Gastrocnemius medialis (tissue), 4 donors: ENCODE measurements at regions of chr3 and their contacts with region 1.

Region 1: DNA sequence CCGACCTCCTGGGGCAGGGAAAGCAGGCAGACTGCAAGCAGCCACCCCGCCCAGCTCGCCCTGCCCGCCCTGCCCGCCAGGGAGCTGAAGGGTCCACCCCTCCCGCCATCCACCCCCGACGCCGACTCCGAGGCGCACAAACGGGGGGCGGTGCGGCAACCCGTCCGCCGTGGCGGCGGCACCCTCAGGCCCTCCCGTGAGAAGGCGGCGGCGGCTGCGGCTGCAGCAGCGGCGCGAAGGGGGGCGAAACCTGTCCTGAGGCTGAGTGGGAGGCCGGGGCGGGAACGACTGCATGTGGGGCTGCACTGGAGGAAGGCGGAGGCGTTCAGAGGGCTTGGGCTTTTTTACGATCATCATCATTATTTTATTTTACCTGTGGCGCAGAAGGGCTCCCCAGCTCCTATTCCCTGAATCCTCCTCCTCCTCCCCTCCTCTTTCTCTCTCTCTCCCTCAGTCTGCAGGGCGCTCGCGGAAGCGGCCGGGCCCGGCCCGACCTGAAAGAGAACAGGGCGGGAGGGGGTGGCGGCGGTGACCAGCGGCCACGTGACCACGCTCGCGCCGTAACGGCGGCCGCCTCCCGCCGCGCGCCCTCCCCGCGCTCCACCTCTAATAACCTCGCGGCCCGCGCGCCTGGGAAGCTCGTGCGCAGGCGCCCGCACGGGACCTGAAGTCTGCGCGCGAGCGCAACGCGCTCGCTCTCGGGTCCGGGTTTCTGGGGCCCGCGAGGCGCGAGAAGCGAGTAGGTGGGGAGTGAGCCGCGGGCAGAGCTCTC is at the start of gene TBC1D5:
- DNase-seq: peak; percentile 91 to 96
- ATAC-seq: peak; percentile 90 to 93
- H3K4me3 ChIP-seq: peak within 1 kb of the TSS; percentile 71 to 96 (median 83)
- H3K27ac ChIP-seq: peak within 1 kb of the TSS; percentile 92 to 99 (median 96)
- H3K4me1 ChIP-seq: peaks cover 19 to 21% of the 10 kb centered on the region in 2 donors
- H3K27me3 ChIP-seq: no peaks in the 10 kb centered on the region
- CTCF ChIP-seq: peak in 1 of 5 experiments; percentile 7
- POLR2A ChIP-seq: peak; percentile 81 to 88
- total RNA-seq, gene TBC1D5: 20.3 to 34.4 (median 27.1) TPM

Region 2: GRCh38 chr3:16290007-16290826 is 1452.1 kb before region 1 on chr3:
- in situ Hi-C with region 1: loop called in 1 of 4 experiments (anchors 25 kb)
- intact Hi-C with region 1: no loop called
- DNase-seq: peak in 1 of 2 donors; percentile 26
- ATAC-seq: no peak
- H3K4me3 ChIP-seq: no peak overlapping the region
- H3K27ac ChIP-seq: peak overlapping the region in 3 of 4 donors; percentile 75 to 83 (median 76)
- H3K4me1 ChIP-seq: peaks cover 50 to 57% of the 10 kb centered on the region in 2 donors
- H3K27me3 ChIP-seq: no peaks in the 10 kb centered on the region
- CTCF ChIP-seq: peak; percentile 60 to 83 (median 79)
- POLR2A ChIP-seq: no peak

Region 3: GRCh38 chr3:17190353-17191078 is 551.8 kb before region 1 on chr3:
- in situ Hi-C with region 1: no loop called
- intact Hi-C with region 1: loop called (anchors 5 kb)
- DNase-seq: peak; percentile 23 to 55
- ATAC-seq: peak; percentile 83 to 84
- H3K4me3 ChIP-seq: peak overlapping the region in 1 of 4 donors; percentile 11
- H3K27ac ChIP-seq: peak overlapping the region; percentile 76 to 86 (median 85)
- H3K4me1 ChIP-seq: peaks cover 45 to 55% of the 10 kb centered on the region in 2 donors
- H3K27me3 ChIP-seq: no peaks in the 10 kb centered on the region
- CTCF ChIP-seq: no peak
- POLR2A ChIP-seq: no peak

Region 4: GRCh38 chr3:17481116-17481515 is 261.2 kb before region 1 on chr3:
- in situ Hi-C with region 1: no loop called
- intact Hi-C with region 1: loop called (anchors 5 kb)
- DNase-seq: peak; percentile 83 to 92
- ATAC-seq: peak; percentile 98
- H3K4me3 ChIP-seq: no peak overlapping the region
- H3K27ac ChIP-seq: peak overlapping the region in 3 of 4 donors; percentile 48 to 68 (median 68)
- H3K4me1 ChIP-seq: peaks cover 0 to 4% of the 10 kb centered on the region in 2 donors
- H3K27me3 ChIP-seq: no peaks in the 10 kb centered on the region
- CTCF ChIP-seq: no peak
- POLR2A ChIP-seq: no peak

Region 5: DNA sequence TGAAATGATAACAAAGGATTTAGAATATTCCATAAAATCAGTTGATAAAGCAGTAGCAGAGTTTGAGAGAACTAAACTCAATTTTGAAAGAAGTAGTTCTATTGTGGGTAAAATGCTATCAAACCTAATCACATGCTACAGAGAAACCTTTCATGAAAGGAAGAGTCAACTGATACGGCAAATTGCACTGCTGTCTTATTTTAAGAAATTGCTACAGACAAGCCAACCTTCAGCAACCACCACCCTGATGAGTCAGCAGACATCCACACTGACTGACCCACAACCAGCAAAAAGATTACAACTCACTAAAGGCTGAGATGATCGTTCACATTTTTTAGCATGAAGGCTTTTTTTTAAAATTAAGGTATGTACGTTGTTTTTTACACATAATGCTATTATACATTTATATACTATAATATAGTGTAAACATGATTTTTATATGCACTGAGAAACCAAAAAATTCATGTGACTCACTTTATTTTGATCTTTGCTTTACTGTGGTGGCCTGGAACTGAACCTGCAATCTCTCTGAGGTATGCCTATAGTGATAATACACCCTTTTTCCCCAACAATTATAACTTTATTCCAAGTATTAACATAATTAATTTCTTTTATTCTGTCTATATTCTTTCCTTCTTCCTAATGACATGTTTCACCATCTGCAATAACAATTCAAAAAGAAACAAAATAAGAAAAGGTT is 109.7 kb before region 1 on chr3:
- in situ Hi-C with region 1: no loop called
- intact Hi-C with region 1: loop called (anchors 2 kb)
- DNase-seq: peak; percentile 47 to 75
- ATAC-seq: peak; percentile 99
- H3K4me3 ChIP-seq: no peak overlapping the region
- H3K27ac ChIP-seq: peak overlapping the region; percentile 49 to 71 (median 66)
- H3K4me1 ChIP-seq: peaks cover 18 to 19% of the 10 kb centered on the region in 2 donors
- H3K27me3 ChIP-seq: no peaks in the 10 kb centered on the region
- CTCF ChIP-seq: no peak
- POLR2A ChIP-seq: no peak

Region 6: DNA sequence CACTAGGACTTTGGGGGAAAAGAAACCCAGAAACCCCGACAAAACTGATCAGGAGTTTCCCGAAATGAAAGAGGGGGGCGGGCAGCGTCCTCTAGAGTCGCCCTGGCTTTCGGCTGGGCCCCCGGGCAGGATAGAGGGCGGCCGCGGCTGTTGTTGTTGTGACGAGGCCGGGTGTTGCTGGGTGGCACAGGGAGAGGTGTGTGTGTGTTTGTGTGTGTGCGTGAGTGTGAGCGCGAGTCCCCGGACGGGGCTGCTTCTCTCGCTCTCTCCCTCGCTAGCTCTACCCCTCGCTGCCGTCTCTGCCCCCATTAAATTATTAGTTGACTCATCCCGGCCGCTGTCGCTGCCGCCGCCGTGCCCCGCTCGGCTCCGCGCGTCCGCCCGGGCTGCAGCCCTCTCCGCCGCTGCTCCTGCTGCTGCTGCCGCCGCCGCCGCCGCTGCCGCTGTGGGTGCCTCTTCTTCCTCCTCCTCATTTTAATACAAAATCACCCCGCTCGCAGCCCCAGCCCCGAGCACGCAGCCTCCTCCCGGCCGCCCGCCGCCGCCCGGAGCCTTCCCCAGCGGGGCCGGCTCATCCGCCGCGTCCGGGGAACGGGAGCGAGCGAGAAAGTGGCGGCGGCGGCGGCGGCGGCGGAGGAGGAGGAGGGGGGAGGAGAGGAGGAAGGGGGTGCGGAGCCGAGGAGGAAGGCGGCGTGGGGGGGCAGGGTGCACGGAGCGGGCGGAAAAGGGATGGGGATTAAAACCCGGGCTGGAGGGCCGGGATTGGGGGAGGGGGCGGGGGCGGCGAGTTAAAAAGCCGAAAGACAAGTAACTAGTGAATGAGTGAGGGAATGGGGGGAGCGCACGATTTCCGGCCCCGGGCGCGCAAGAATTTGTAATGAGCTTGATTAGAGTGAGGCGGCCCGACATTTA is 682.7 kb after region 1 on chr3 and contains the start of gene SATB1:
- in situ Hi-C with region 1: no loop called
- intact Hi-C with region 1: loop called (anchors 10 kb)
- DNase-seq: peak; percentile 74 to 75
- ATAC-seq: peak; percentile 75 to 81
- H3K4me3 ChIP-seq: peak within 1 kb of the TSS; percentile 78 to 98 (median 92)
- H3K27ac ChIP-seq: peak within 1 kb of the TSS; percentile 91 to 99 (median 95)
- H3K4me1 ChIP-seq: peaks cover 22 to 29% of the 10 kb centered on the region in 2 donors
- H3K27me3 ChIP-seq: no peaks in the 10 kb centered on the region
- CTCF ChIP-seq: peak in 1 of 5 experiments; percentile 6
- POLR2A ChIP-seq: peak; percentile 62 to 83
- total RNA-seq, gene SATB1: 40.9 to 69.6 (median 41.7) TPM